Left ventricle myocardium superior (tissue), 1 donor: ENCODE measurements at regions of chr1 and their contacts with region 1.

Region 1: GRCh38 chr1:15902882-15903281 is 55.4 kb downstream of the SPEN start:
- DNase-seq: no peak
- ATAC-seq: peak; percentile 65

Region 2: GRCh38 chr1:15835741-15836510 is 67.0 kb before region 1 on chr1:
- intact Hi-C with region 1: loop called (anchors 10 kb)
- DNase-seq: peak; percentile 100
- ATAC-seq: peak; percentile 88

Region 3: DNA sequence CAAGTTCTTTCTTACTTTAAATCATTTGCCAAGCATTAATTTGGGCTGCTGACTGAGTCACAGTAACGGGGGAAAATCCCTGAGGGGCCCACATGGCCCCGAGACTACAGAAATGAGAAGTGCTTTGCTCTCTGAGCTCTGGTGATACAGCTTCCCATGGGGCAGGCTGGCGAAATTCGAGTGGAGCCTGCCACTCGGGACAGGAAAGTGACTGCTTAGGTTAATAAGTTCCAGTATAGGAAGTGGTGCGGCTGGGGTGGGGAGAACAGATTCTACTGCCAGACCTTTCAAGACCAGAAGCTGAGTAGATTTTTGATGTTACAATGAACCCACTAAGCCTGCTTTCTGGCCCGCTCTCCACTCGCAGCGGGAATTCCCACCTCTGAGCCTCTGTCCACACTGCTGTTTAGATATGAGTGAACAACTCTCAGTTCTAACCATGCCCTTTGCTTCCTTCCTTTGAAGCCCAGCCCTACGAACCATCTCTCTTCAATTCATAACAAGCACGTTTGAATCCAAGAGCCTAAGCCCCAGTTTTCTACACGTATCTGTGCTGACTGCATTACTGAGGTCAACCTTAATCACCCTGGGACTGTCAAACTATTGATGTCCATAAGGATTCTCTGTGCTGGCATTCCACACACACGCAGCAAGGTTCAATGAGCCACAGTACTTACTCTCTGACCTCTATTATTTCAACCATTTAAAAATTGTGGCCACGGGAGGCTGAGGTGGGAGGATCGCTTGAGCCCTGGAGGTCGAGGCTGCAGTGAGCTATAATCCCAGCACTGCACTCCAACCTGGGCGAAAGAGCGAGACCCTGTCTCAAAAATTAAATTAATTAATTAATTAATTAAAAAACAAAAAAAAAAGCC is 63.4 kb after region 1 on chr1:
- intact Hi-C with region 1: no loop called
- DNase-seq: no peak
- ATAC-seq: peak; percentile 35